ENCODE measurements at regions of chr7 and their contacts with region 1.

Region 1: DNA sequence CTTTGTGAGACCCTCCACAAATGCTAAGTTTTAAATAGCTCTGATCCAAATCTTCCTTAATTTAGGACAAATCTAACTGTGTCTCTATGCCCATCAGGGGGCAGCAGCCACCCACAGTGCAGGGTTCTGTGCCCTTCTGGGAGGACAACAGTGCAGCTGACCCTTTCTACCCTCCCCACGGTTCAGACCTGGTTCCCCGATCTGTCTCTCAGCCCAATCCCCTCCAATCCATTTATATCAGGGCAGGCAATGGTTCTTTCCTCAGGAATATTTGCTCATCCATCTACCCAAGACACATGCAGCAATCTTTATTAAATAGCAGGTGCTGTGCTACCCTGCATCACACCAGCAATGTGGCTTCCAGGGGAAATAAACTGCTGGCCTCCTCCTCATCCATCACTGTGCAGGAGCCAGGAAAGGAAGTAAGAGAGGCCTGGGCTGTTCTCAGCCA is 4.0 kb upstream of the RBM28 start:
- DNase-seq: no peak
- H3K4me3 ChIP-seq: no peak overlapping the region
- H3K27ac ChIP-seq: no peak overlapping the region
- H3K4me1 ChIP-seq: peaks cover 0 to 21% (median 18%) of the 10 kb centered on the region in 4 donors
- H3K27me3 ChIP-seq: peaks cover 0 to 24% of the 10 kb centered on the region in 2 donors
- CTCF ChIP-seq: peak; percentile 44 to 59

Region 2: DNA sequence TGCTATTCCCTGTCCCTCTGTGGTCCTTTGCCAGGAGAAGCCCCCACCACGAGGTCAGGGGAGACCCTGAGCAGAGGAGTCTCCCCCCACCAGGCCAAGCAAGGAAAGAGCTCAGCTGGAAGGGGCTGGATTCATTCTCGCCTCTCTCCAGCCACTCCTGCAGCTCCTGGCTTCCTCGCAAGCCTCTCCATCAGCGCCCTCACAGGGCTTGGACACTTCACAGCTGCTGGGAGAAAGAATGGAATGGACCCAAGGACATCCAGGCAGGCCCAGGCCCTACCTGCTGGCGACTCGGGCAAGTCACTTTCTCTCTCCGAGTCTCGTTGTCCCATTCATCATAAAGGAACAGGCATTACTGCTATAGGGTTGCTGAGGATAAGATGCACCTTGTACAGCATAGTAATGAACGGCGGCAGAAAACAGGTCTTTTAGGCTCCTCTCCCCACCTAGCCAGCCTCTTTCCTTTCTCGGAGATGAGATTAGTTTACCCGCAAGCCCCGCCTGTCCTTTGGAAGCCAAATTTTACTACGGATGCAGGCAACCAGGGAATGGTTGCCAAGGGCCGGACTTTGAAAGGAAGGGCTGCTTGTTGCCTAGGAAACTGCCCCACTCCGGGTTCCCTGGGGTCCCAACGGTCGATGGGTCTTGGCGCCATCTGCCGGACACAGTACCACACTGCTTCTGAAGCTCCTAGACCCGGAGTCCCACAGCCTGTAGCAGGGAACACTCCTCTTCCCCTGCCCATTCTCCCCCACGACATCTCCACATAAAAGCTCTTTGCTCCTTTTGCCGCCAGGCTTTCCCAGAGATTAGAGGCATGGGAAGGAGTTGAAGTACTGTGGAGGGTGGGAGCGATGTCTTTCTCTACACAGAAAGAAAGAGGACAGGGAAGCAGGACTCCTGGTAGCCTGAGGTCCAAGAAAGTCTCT is 39.8 kb after region 1 on chr7:
- intact Hi-C with region 1: loop called (anchors 2 kb)
- DNase-seq: peak; percentile 63 to 83
- H3K4me3 ChIP-seq: no peak overlapping the region
- H3K27ac ChIP-seq: no peak overlapping the region
- H3K4me1 ChIP-seq: peaks cover 0 to 7% (median 2%) of the 10 kb centered on the region in 4 donors
- H3K27me3 ChIP-seq: peaks cover 0 to 9% of the 10 kb centered on the region in 2 donors
- CTCF ChIP-seq: peak; percentile 78 to 80